HEK293 (cell line): ENCODE measurements at regions of chr17 and their contacts with region 1.

Region 1: GRCh38 chr17:32319548-32319905 is 22.4 kb downstream of the C17orf75 start:
- H3K4me3 ChIP-seq: no peak overlapping the region
- H3K27ac ChIP-seq: no peak overlapping the region
- H3K4me1 ChIP-seq: no peaks in the 10 kb centered on the region
- CTCF ChIP-seq: peak; percentile 84

Region 2: GRCh38 chr17:32015245-32016013 is 304.1 kb before region 1 on chr17:
- CTCF ChIA-PET with region 1: no interaction called
- POLR2A ChIA-PET with region 1: no interaction called
- H3K4me3 ChIP-seq: no peak overlapping the region
- H3K27ac ChIP-seq: no peak overlapping the region
- H3K4me1 ChIP-seq: peaks cover 17% of the 10 kb centered on the region
- CTCF ChIP-seq: no peak

Region 3: GRCh38 chr17:32330147-32330546 is 10.6 kb after region 1 on chr17:
- CTCF ChIA-PET with region 1: interaction called, 28 read pairs
- POLR2A ChIA-PET with region 1: no interaction called
- H3K4me3 ChIP-seq: no peak overlapping the region
- H3K27ac ChIP-seq: no peak overlapping the region
- H3K4me1 ChIP-seq: no peaks in the 10 kb centered on the region
- CTCF ChIP-seq: no peak